Pancreas (tissue), 10 donors: ENCODE measurements at regions of chr5 and their contacts with region 1.

Region 1: GRCh38 chr5:170420780-170421412 is 31.7 kb upstream of the KCNMB1 start:
- DNase-seq: peak in 3 of 6 donors; percentile 17 to 54 (median 36)
- ATAC-seq: peak; percentile 43 to 85 (median 71)
- H3K4me3 ChIP-seq: no peak overlapping the region
- H3K27ac ChIP-seq: no peak overlapping the region
- H3K4me1 ChIP-seq: no peaks in the 10 kb centered on the region
- H3K27me3 ChIP-seq: no peaks in the 10 kb centered on the region
- CTCF ChIP-seq: peak; percentile 53 to 75 (median 64)

Region 2: DNA sequence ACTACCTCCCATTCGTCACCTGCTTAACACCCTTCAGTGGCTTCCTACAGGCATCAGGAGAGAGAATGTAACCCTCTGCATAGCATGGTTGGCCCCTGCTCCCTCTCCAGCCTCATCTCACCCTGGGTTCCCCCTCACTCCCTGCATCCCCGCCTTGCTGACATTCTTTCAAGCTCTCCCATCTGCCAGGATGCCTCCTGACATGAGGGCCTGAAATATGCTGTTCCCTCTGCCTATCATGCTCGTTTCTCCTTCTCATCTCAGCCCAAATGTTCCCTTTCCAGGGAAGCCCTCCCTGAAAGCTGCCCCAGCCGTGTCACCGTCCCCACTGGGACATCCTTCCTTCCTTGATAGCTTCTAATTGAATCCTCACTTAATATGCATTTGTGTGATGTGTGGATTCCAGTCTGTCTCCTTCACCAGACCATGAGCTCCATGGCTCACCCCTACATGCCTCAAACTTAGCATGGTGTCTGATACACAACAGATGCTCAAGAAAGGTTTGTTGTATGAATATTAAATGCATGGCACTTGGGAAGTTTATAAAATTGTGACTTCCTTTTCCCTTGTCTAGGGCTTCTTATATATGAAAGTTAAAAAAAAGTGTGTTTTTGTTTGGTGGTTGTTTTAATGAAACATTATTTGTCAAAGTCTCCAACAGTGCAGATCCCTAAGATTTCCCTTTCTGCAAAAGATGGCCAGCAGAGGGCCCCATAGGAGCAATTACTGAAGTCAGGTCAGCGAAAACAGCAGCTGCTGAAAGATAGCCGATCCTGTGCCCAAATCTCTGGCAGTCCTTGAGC is 195.4 kb before region 1 on chr5:
- intact Hi-C with region 1: loop called in 2 of 3 experiments (anchors 5 to 10 kb)
- DNase-seq: peak in 5 of 6 donors; percentile 23 to 70 (median 49)
- ATAC-seq: peak in 3 of 4 donors; percentile 76 to 88 (median 79)
- H3K4me3 ChIP-seq: no peak overlapping the region
- H3K27ac ChIP-seq: no peak overlapping the region
- H3K4me1 ChIP-seq: no peaks in the 10 kb centered on the region
- H3K27me3 ChIP-seq: no peaks in the 10 kb centered on the region
- CTCF ChIP-seq: peak in 3 of 4 donors; percentile 36 to 66 (median 64)